Activated CD4-positive, alpha-beta memory T cell treated with anti-CD3 and anti-CD28 coated beads, Interleukin-2, amount 10 ng/mL, durations not matched to agents 7 days and 5 days (primary cell): ENCODE measurements at regions of chr10 and their contacts with region 1.

Region 1: DNA sequence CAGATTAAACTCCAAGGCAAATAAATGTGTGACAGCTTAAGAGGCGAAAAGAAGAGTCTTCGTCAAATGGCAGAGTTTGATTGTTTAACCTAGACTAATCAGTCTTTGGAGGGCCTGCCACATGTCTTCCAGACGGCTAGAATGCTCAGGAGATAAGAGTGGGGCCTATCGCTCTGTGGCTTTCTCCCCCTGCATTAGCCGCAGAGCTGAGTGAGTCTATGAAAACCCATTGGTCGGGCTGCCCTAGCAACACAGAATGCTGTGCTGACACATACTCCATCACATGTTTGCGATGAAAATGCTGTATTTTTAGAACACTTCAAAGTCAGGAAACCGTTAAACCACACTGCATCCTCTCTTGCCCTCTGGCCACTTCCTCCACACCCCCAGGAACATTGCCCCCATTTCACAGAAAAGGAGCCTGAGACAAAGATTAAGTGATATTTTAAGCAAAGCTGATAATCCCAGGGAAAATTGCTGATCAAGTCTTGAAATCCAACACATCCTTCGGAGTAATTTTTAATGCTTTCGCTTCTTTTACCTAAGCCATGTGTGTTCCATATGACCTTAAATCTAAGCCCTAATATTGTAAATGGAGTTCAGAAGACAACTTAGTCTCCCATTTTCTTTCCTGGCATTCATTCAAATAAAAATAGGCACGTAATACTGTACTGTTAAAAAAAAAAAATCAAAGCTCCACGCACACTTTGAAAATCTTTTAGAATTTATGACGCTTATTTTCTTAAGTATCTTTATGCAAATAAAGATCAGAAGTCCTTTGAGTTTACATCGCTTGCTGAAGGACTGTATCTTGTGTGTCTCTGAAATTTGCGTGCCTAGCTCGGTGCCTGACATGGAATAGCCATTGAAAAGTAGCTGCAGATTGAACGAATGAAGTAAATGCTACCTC is 161.2 kb downstream of the CELF2 start:
- DNase-seq: peak; percentile 92
- H3K4me3 Mint-ChIP-seq: no peak overlapping the region
- H3K27ac Mint-ChIP-seq: no peak overlapping the region
- H3K4me1 Mint-ChIP-seq: peaks cover 92% of the 10 kb centered on the region
- H3K27me3 Mint-ChIP-seq: no peaks in the 10 kb centered on the region

Region 2: DNA sequence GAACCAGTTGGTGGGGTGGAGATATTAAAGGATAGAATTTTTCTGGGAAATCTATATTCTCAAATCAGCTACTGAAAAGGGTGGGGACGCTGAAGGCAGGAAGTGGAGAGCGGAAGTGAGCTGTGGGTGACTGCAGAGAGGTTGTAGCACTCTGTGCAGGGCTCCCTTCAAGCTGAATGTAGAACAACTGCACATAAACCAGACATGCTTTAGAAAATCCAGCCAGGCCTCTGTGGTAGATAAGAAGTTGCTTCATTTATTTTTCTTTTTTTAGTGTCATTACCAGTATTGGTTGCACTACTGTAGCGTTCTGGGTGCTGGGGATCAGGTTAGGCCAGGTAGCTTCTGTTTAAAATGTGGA is 33.4 kb before region 1 on chr10:
- CTCF ChIA-PET with region 1: interaction called, 11 read pairs
- POLR2A ChIA-PET with region 1: interaction called, 1,515 read pairs
- DNase-seq: peak; percentile 82
- H3K4me3 Mint-ChIP-seq: peak overlapping the region; percentile 60
- H3K27ac Mint-ChIP-seq: peak overlapping the region; percentile 93
- H3K4me1 Mint-ChIP-seq: peaks cover 94% of the 10 kb centered on the region
- H3K27me3 Mint-ChIP-seq: no peaks in the 10 kb centered on the region

Region 3: GRCh38 chr10:11197266-11197712 is 18.4 kb after region 1 on chr10:
- CTCF ChIA-PET with region 1: no interaction called
- POLR2A ChIA-PET with region 1: interaction called, 14 read pairs
- DNase-seq: no peak
- H3K4me3 Mint-ChIP-seq: no peak overlapping the region
- H3K27ac Mint-ChIP-seq: no peak overlapping the region
- H3K4me1 Mint-ChIP-seq: peaks cover 94% of the 10 kb centered on the region
- H3K27me3 Mint-ChIP-seq: no peaks in the 10 kb centered on the region

Region 4: GRCh38 chr10:11218395-11218794 is 39.5 kb after region 1 on chr10:
- CTCF ChIA-PET with region 1: no interaction called
- POLR2A ChIA-PET with region 1: interaction called, 72 read pairs
- DNase-seq: no peak
- H3K4me3 Mint-ChIP-seq: no peak overlapping the region
- H3K27ac Mint-ChIP-seq: peak overlapping the region; percentile 48
- H3K4me1 Mint-ChIP-seq: peaks cover 89% of the 10 kb centered on the region
- H3K27me3 Mint-ChIP-seq: no peaks in the 10 kb centered on the region

Region 5: DNA sequence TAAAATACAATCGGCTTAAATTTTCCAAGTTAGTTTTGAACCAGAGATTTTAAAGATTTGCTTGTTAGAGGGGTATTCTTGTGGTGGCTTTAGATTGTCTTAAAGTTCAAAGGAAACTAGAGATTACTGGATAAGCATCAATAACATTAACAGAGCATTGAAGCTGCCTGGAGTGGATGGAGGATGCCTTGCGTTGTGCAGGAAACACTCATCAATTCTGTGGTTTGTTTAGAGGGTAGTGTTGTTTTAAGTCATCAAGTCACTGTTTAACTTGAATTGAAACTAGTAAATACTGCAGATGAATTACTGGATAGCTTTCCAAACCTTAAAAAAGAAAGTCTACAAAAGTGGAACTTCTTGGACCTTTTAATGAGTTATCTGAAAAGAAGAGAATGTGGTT is 57.4 kb after region 1 on chr10:
- CTCF ChIA-PET with region 1: interaction called, 5 read pairs
- POLR2A ChIA-PET with region 1: interaction called, 106 read pairs
- DNase-seq: peak; percentile 52
- H3K4me3 Mint-ChIP-seq: peak overlapping the region; percentile 18
- H3K27ac Mint-ChIP-seq: peak overlapping the region; percentile 71
- H3K4me1 Mint-ChIP-seq: peaks cover 89% of the 10 kb centered on the region
- H3K27me3 Mint-ChIP-seq: no peaks in the 10 kb centered on the region